Heart right ventricle (tissue), 16 donors: ENCODE measurements at regions of chr10 and their contacts with region 1.

Region 1: DNA sequence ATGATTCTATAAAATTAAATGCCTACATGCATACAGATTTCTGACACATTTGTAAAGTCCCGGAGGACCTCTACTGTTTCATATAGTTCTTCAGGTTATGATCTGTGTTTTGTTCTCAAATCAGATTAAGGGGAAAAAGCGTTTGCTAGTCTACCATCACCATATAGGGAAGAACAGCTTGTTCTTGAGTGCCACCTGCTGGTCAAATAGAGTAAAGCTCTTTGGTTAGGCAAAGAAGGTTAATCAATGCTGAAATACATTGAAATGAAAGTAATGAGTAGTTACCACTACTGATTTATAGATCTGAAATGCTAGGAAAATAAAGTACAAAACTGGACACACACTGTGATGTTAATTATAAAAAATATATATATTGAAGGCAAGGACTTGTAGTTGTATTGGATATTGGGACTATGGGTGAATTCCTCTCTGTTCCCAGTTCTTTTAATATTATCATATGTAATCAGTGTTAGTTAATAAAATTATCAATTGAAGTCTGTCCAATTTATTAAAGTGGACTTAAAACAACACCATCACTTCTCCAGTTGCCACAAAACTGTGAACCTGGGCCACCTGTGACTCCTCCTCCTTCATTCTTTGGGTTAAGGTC is 72.6 kb upstream of the PDLIM1 start:
- DNase-seq: peak in 1 of 2 donors; percentile 60
- ATAC-seq: peak in 5 of 8 donors; percentile 25 to 60 (median 45)
- H3K4me3 ChIP-seq: no peak overlapping the region
- H3K27ac ChIP-seq: peak overlapping the region in 2 of 10 donors; percentile 8 to 75
- H3K4me1 ChIP-seq: peaks cover 0 to 52% (median 33%) of the 10 kb centered on the region in 9 donors
- H3K27me3 ChIP-seq: no peaks in the 10 kb centered on the region
- CTCF ChIP-seq: peak; percentile 79 to 98 (median 92)

Region 2: DNA sequence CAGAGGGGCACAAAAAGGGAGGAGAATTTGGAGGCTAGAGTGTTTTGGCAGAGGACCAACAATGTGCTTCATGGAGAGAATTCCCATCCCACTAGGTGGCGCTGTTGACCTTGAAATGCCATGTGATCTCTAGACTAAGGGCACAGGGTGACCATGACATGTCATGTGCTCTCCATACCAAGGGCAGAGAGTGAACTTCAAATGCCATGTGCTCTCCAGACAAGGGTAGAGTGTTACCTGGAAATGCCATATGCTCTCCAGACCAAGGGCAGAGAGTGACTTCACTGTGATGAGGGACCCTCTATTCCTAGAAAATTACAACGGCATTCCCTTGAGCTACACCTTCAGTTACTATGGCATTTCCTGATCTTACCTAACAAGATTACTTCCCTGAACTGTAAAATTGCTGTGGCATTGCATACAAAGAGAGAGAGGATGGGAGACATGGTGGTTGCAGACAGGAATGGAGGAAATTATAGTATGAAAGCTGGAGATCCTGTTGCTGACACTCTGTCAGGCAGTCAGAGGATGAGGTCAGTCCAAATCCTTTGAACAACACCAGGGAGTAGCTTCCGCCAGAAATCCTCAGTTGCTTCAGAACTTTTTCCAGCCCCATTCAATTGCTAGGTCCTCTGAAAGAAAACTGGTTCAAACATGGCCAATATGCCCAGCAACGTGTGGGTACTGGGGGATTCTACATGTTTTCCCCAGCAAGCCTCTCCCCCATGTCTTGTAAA is 230.2 kb before region 1 on chr10:
- intact Hi-C with region 1: loop called in 3 of 10 experiments (anchors 5 to 10 kb)
- DNase-seq: peak in 1 of 2 donors; percentile 69
- ATAC-seq: peak in 6 of 8 donors; percentile 53 to 75 (median 57)
- H3K4me3 ChIP-seq: no peak overlapping the region
- H3K27ac ChIP-seq: no peak overlapping the region
- H3K4me1 ChIP-seq: no peaks in the 10 kb centered on the region
- H3K27me3 ChIP-seq: no peaks in the 10 kb centered on the region
- CTCF ChIP-seq: peak; percentile 39 to 77 (median 63)

Region 3: DNA sequence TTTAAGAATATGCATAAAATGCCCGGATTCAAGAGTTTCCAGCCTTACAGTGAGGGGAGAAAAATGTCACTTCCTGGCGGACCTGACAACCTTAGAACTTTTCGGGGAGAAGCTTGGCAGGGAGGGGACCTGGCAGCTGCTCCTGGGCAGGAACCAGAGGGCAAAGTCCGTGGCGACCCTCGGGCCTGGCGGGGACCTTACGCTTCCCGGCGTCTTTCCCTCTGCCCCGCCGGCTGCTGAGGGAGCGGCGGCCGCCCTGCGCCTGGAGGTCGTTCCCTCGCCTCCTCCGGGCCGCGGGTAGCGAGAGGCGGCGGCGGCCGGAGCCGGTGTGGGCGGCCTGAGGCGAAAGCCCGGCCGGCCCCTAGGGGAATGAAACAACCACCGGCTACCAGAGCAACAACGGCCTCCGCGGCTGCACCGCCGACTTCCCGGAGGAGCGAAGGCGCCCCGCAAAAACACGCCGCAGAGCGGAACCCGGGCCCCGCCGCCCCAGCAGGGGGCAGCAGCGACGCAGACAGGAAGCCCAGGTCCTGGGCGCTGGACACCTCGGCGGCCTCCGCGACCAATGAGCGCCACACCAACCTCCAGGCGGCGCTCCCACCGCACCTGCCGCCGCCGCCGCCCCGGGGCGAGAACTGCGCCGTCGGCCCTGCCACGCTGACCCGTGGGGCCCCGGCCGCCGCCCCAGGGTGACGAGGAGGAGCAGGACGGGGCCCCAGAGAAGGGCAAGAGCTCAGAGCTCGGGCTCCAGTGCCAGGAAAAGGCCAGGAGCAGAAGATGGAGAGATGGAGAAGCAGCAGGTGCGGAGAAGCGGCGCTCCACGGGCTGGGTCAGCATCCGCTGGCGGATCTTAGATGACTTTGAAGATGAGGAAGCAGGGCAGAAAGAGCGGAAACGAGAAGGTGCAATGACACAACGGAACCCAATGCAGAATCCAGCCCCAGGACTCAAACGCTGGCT is 179.9 kb before region 1 on chr10:
- intact Hi-C with region 1: loop called in 5 of 10 experiments (anchors 2 to 10 kb)
- DNase-seq: peak; percentile 85 to 92
- ATAC-seq: peak; percentile 97 to 99 (median 98)
- H3K4me3 ChIP-seq: peak overlapping the region; percentile 28 to 80 (median 72)
- H3K27ac ChIP-seq: peak overlapping the region; percentile 8 to 90 (median 82)
- H3K4me1 ChIP-seq: peaks cover 0 to 11% (median 6%) of the 10 kb centered on the region in 9 donors
- H3K27me3 ChIP-seq: no peaks in the 10 kb centered on the region
- CTCF ChIP-seq: peak; percentile 92 to 100 (median 97)

Region 4: DNA sequence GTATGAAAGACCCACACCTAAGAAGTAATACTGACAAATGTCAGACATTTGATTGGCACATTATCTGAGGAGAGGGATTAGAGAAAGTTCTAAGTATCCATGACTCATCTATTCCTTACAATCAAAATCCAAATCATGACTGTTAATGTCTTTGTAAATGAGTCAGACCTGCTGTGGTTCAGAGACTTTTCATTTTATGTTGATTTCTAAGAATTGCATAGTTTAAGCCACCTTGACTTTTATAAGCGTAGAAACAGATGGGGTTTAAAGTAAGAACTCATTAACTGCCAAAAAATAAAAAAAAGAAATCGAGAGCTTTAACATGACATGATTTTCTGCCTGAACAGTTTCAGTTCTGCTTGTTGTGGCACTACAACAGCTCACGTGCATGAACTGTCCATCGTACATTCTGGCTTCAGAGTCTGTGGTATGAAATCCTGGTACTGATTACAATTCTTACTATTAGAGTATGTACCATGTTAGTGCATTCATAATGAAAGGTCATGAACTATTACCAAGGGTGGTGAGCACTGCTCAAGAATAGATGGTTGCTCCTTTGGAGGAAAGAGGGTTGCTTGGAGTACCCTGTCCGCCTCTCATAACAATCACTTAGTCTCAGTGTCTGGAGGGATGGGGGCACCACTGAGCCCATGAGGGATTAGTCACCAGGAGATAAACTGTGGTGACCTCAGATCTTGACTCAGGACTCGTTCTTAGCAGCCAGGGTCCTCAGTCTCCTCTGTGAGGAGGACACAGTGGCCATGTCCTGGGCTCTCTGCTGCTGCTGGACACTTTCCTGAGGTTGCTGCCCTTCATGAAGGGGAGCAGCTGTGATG is 127.1 kb before region 1 on chr10:
- intact Hi-C with region 1: loop called in 1 of 10 experiments (anchors 5 kb)
- DNase-seq: no peak
- ATAC-seq: peak in 6 of 8 donors; percentile 9 to 66 (median 34)
- H3K4me3 ChIP-seq: no peak overlapping the region
- H3K27ac ChIP-seq: peak overlapping the region in 1 of 10 donors; percentile 44
- H3K4me1 ChIP-seq: peaks cover 0 to 16% (median 0%) of the 10 kb centered on the region in 9 donors
- H3K27me3 ChIP-seq: no peaks in the 10 kb centered on the region
- CTCF ChIP-seq: no peak